A673 (cell line): ENCODE measurements at regions of chr4 and their contacts with region 1.

Region 1: GRCh38 chr4:84699001-84699671 is 116.2 kb downstream of the CDS1 start:
- DNase-seq: no peak
- H3K4me3 ChIP-seq: no peak overlapping the region
- H3K27ac ChIP-seq: no peak overlapping the region
- H3K4me1 ChIP-seq: no peaks in the 10 kb centered on the region
- H3K27me3 ChIP-seq: no peaks in the 10 kb centered on the region
- CTCF ChIP-seq: no peak

Region 2: GRCh38 chr4:84126061-84126787 is 572.9 kb before region 1 on chr4:
- CTCF ChIA-PET with region 1: no interaction called
- POLR2A ChIA-PET with region 1: no interaction called
- intact Hi-C with region 1: no loop called
- DNase-seq: no peak
- H3K4me3 ChIP-seq: no peak overlapping the region
- H3K27ac ChIP-seq: no peak overlapping the region
- H3K4me1 ChIP-seq: no peaks in the 10 kb centered on the region
- H3K27me3 ChIP-seq: no peaks in the 10 kb centered on the region
- CTCF ChIP-seq: no peak

Region 3: GRCh38 chr4:84379917-84380641 is 319.1 kb before region 1 on chr4:
- CTCF ChIA-PET with region 1: no interaction called
- POLR2A ChIA-PET with region 1: interaction called, 12 read pairs
- intact Hi-C with region 1: no loop called
- DNase-seq: peak; percentile 17
- H3K4me3 ChIP-seq: no peak overlapping the region
- H3K27ac ChIP-seq: no peak overlapping the region
- H3K4me1 ChIP-seq: peaks cover 7% of the 10 kb centered on the region
- H3K27me3 ChIP-seq: peaks cover 70% of the 10 kb centered on the region
- CTCF ChIP-seq: no peak

Region 4: GRCh38 chr4:84733343-84734033 is 34.4 kb after region 1 on chr4:
- CTCF ChIA-PET with region 1: no interaction called
- POLR2A ChIA-PET with region 1: no interaction called
- intact Hi-C with region 1: no loop called
- DNase-seq: no peak
- H3K4me3 ChIP-seq: no peak overlapping the region
- H3K27ac ChIP-seq: no peak overlapping the region
- H3K4me1 ChIP-seq: no peaks in the 10 kb centered on the region
- H3K27me3 ChIP-seq: no peaks in the 10 kb centered on the region
- CTCF ChIP-seq: no peak